ENCODE measurements at regions of chr3 and their contacts with region 1.

Region 1: GRCh38 chr3:34260271-34261006 is 462.0 kb downstream of the PDCD6IP start:
- DNase-seq: peak; percentile 49
- ATAC-seq: no peak
- H3K4me3 Mint-ChIP-seq: no peak overlapping the region
- H3K27ac Mint-ChIP-seq: no peak overlapping the region
- H3K4me1 Mint-ChIP-seq: no peaks in the 10 kb centered on the region
- H3K27me3 Mint-ChIP-seq: peaks cover 5% of the 10 kb centered on the region

Region 2: DNA sequence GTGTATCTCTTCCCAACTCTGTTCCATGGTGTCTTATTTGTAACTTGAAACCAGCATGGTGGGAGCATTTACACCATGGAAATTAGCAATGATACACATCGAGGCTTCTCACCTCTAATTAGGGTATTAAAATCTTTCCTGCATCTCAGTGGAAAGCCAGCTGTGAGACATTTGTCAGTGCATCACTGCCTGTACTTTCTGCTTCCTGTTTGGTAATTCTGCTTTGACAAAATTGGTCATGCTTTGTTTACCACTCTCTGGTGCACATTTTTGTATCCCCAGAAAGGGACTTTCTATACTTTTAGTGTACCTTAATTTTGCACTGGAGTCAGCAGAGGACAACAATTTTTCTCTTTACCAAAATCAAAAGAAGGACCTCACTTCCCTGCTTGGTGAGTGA is 59.9 kb before region 1 on chr3:
- CTCF ChIA-PET with region 1: no interaction called
- POLR2A ChIA-PET with region 1: no interaction called
- DNase-seq: no peak
- ATAC-seq: no peak
- H3K4me3 Mint-ChIP-seq: no peak overlapping the region
- H3K27ac Mint-ChIP-seq: no peak overlapping the region
- H3K4me1 Mint-ChIP-seq: no peaks in the 10 kb centered on the region
- H3K27me3 Mint-ChIP-seq: peaks cover 3% of the 10 kb centered on the region

Region 3: DNA sequence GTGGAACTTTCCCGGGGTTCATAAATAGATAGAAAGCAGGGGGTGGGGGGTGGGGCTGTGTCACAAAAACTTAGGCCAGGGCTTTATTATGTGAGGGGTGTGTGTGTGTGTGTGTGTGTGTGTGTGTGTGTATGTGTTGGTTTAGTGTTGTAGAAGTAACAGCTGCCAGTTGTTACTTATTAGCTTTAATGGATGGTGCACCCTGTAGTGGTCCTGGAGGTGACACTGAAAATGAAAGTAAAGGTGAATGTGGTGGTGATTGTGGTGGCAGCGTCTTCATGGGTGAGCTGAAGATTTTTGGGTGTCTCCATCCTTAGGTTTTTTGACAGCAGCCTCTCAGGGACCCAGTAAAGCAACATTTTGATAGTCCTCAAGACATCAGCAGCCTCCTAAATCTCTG is 12.1 kb before region 1 on chr3:
- CTCF ChIA-PET with region 1: interaction called, 18 read pairs
- POLR2A ChIA-PET with region 1: no interaction called
- DNase-seq: peak; percentile 37
- ATAC-seq: peak; percentile 55
- H3K4me3 Mint-ChIP-seq: no peak overlapping the region
- H3K27ac Mint-ChIP-seq: no peak overlapping the region
- H3K4me1 Mint-ChIP-seq: peaks cover 11% of the 10 kb centered on the region
- H3K27me3 Mint-ChIP-seq: peaks cover 3% of the 10 kb centered on the region

Region 4: GRCh38 chr3:34361921-34362320 is 101.5 kb after region 1 on chr3:
- CTCF ChIA-PET with region 1: no interaction called
- POLR2A ChIA-PET with region 1: no interaction called
- DNase-seq: peak; percentile 21
- ATAC-seq: peak; percentile 42
- H3K4me3 Mint-ChIP-seq: no peak overlapping the region
- H3K27ac Mint-ChIP-seq: peak overlapping the region; percentile 5
- H3K4me1 Mint-ChIP-seq: peaks cover 7% of the 10 kb centered on the region
- H3K27me3 Mint-ChIP-seq: no peaks in the 10 kb centered on the region

Region 5: GRCh38 chr3:34683851-34684250 is 423.4 kb after region 1 on chr3:
- CTCF ChIA-PET with region 1: interaction called, 20 read pairs
- POLR2A ChIA-PET with region 1: no interaction called
- DNase-seq: peak; percentile 48
- ATAC-seq: no peak
- H3K4me3 Mint-ChIP-seq: no peak overlapping the region
- H3K27ac Mint-ChIP-seq: no peak overlapping the region
- H3K4me1 Mint-ChIP-seq: no peaks in the 10 kb centered on the region
- H3K27me3 Mint-ChIP-seq: no peaks in the 10 kb centered on the region